Endothelial cell of umbilical vein (primary cell): ENCODE measurements at regions of chr3 and their contacts with region 1.

Region 1: GRCh38 chr3:43855674-43856299 is 165.0 kb downstream of the ABHD5 start:
- DNase-seq: peak; percentile 52
- H3K4me3 ChIP-seq: no peak overlapping the region
- H3K27ac ChIP-seq: no peak overlapping the region
- H3K4me1 ChIP-seq: no peaks in the 10 kb centered on the region
- H3K27me3 ChIP-seq: peaks cover 56% of the 10 kb centered on the region in 2 experiments
- CTCF ChIP-seq: peak; percentile 78 to 82
- POLR2A ChIP-seq: no peak

Region 2: GRCh38 chr3:43709022-43709421 is 146.8 kb before region 1 on chr3:
- CTCF ChIA-PET with region 1: no interaction called
- POLR2A ChIA-PET with region 1: no interaction called
- dilution Hi-C with region 1: no loop called
- intact Hi-C with region 1: no loop called
- DNase-seq: no peak
- H3K4me3 ChIP-seq: no peak overlapping the region
- H3K27ac ChIP-seq: no peak overlapping the region
- H3K4me1 ChIP-seq: peaks cover 20% of the 10 kb centered on the region
- H3K27me3 ChIP-seq: no peaks in the 10 kb centered on the region
- CTCF ChIP-seq: no peak
- POLR2A ChIP-seq: no peak

Region 3: DNA sequence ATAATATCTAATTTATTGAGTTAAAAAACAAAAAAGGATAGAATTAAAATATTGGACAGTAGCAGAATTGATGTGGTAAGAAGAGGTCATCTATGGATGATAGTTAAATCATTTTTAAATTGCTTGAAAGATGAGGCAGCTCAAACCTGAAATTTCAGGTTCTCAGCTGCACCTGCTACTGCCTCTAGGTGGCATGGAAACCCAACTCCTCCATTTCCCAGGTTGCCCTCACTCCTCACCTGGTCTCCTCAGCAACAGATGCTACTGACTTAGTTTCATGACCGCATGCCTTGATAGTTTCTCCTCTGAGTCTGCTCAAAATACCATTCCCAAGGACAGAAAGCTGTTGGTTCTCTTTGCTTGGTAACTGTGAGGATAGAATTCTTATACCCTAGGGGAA is 16.9 kb before region 1 on chr3:
- CTCF ChIA-PET with region 1: interaction called, 12 read pairs
- POLR2A ChIA-PET with region 1: no interaction called
- dilution Hi-C with region 1: no loop called
- intact Hi-C with region 1: no loop called
- DNase-seq: no peak
- H3K4me3 ChIP-seq: no peak overlapping the region
- H3K27ac ChIP-seq: no peak overlapping the region
- H3K4me1 ChIP-seq: no peaks in the 10 kb centered on the region
- H3K27me3 ChIP-seq: peaks cover 0 to 2% of the 10 kb centered on the region in 2 experiments
- CTCF ChIP-seq: no peak
- POLR2A ChIP-seq: no peak

Region 4: GRCh38 chr3:43894176-43895049 is 38.6 kb after region 1 on chr3:
- CTCF ChIA-PET with region 1: interaction called, 18 read pairs
- POLR2A ChIA-PET with region 1: no interaction called
- dilution Hi-C with region 1: no loop called
- intact Hi-C with region 1: no loop called
- DNase-seq: peak; percentile 77
- H3K4me3 ChIP-seq: peak overlapping the region; percentile 45 to 69 (median 57)
- H3K27ac ChIP-seq: peak overlapping the region; percentile 57
- H3K4me1 ChIP-seq: peaks cover 9% of the 10 kb centered on the region
- H3K27me3 ChIP-seq: peaks cover 10 to 30% of the 10 kb centered on the region in 2 experiments
- CTCF ChIP-seq: no peak
- POLR2A ChIP-seq: no peak

Region 5: GRCh38 chr3:43960448-43960840 is 104.7 kb after region 1 on chr3:
- CTCF ChIA-PET with region 1: interaction called, 10 read pairs
- POLR2A ChIA-PET with region 1: no interaction called
- dilution Hi-C with region 1: no loop called
- intact Hi-C with region 1: no loop called
- DNase-seq: no peak
- H3K4me3 ChIP-seq: no peak overlapping the region
- H3K27ac ChIP-seq: no peak overlapping the region
- H3K4me1 ChIP-seq: no peaks in the 10 kb centered on the region
- H3K27me3 ChIP-seq: peaks cover 2 to 3% of the 10 kb centered on the region in 2 experiments
- CTCF ChIP-seq: no peak
- POLR2A ChIP-seq: no peak

Region 6: DNA sequence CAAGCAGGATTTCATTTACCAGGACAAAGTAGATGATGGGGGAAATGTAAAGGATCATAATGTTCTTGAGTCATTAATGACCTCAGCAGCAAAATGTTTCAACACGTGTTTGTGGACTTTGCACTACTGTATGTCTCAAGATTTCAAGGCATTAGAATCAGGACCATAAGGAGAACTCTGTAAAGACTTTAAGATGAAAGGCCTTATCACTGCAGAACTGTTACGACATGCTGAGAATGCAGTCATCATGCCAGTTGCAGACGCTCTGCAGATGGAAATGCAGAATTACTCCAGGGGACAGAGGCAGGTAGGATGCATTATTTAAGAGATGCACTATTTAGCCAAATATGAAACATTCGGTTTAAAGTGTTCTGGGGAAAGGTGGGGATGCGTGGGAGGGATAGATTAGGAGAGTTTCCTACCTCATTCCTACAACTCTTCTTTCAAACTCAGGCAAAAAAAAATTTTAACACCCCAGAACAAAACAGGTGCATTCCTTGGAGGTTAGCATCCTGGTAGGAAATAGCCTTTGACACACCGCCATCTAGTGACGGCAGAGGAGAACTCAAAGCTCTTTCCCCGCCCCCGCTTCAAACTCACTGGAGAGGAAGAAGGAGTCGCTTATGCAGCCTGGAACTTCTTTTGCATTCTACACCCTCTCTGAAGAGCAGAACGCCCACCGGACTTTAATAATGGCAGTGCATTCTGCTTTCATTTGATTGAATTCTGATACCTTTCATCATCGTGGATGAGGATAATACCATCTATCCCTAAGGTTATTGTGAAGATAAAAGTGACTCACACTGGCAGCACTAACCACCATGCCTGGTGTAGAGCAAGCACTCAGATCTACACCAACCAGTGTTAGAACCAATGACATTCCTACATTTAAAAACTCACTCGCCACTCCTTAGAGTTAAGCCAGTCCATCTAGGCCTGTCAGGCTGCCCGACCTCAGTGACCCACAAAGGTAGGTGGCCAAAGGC is 342.8 kb after region 1 on chr3:
- CTCF ChIA-PET with region 1: interaction called, 41 read pairs
- POLR2A ChIA-PET with region 1: no interaction called
- dilution Hi-C with region 1: no loop called
- intact Hi-C with region 1: loop called (anchors 1 kb)
- DNase-seq: peak; percentile 69
- H3K4me3 ChIP-seq: no peak overlapping the region
- H3K27ac ChIP-seq: no peak overlapping the region
- H3K4me1 ChIP-seq: no peaks in the 10 kb centered on the region
- H3K27me3 ChIP-seq: peaks cover 2 to 3% of the 10 kb centered on the region in 2 experiments
- CTCF ChIP-seq: peak; percentile 72 to 83
- POLR2A ChIP-seq: no peak